CD8-positive, alpha-beta memory T cell (primary cell): ENCODE measurements at regions of chr9 and their contacts with region 1.

Region 1: GRCh38 chr9:114405294-114406034 is 17.7 kb upstream of the AKNA start:
- DNase-seq: peak; percentile 67 to 85 (median 72)
- H3K4me3 ChIP-seq: no peak overlapping the region
- H3K4me3 Mint-ChIP-seq: no peak overlapping the region
- H3K27ac ChIP-seq: no peak overlapping the region
- H3K27ac Mint-ChIP-seq: peak overlapping the region in 5 of 8 donors; percentile 0 to 83 (median 20)
- H3K4me1 ChIP-seq: peaks cover 8% of the 10 kb centered on the region
- H3K4me1 Mint-ChIP-seq: peaks cover 5 to 6% (median 6%) of the 10 kb centered on the region in 3 donors
- H3K27me3 ChIP-seq: no peaks in the 10 kb centered on the region
- H3K27me3 Mint-ChIP-seq: no peaks in the 10 kb centered on the region

Region 2: GRCh38 chr9:113929634-113930389 is 475.7 kb before region 1 on chr9:
- CTCF ChIA-PET with region 1: no interaction called
- POLR2A ChIA-PET with region 1: no interaction called
- DNase-seq: no peak
- H3K4me3 ChIP-seq: no peak overlapping the region
- H3K4me3 Mint-ChIP-seq: no peak overlapping the region
- H3K27ac ChIP-seq: no peak overlapping the region
- H3K27ac Mint-ChIP-seq: no peak overlapping the region
- H3K4me1 ChIP-seq: no peaks in the 10 kb centered on the region
- H3K4me1 Mint-ChIP-seq: no peaks in the 10 kb centered on the region
- H3K27me3 ChIP-seq: no peaks in the 10 kb centered on the region
- H3K27me3 Mint-ChIP-seq: peaks cover 0 to 13% of the 10 kb centered on the region in 2 donors

Region 3: DNA sequence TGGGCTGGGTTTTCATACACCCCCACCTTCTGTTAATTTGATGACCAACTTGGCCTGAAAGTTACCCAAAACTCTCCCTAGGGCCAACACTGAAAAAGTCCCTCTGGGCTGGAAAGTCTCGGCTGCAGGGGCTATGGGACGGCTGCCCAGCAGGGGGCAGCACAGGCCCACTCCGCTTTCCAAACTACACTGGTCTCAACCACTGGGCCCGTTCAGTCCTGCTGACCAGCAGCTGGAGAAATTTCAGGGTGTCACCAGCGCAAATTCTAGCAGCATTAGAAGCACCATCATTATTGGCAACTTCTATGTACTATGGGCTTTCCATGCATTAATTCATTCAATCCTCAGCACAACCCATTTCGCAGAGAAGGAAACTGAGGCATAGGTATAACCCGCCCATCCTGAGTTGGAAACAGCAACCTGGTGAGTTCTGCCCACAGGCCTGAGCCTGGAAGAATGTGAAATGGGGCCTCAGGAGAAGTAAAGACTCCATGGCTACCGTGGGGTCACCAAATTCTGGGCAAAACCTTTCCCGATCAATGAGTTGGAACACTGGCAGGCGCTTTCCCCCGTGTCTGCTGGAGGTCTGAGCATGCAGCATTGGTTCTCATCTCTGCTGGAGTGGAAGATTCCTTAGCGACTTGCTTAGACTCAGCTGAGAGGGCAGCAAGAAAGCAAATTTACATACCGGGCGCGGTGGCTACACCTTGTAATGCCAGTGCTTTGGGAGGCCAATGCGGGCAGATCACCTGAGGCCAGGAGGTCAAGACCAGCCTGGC is 66.1 kb before region 1 on chr9:
- CTCF ChIA-PET with region 1: interaction called, 14 read pairs
- POLR2A ChIA-PET with region 1: interaction called, 8 read pairs
- DNase-seq: peak; percentile 40 to 65 (median 42)
- H3K4me3 ChIP-seq: no peak overlapping the region
- H3K4me3 Mint-ChIP-seq: peak overlapping the region in 1 of 7 donors; percentile 36
- H3K27ac ChIP-seq: no peak overlapping the region
- H3K27ac Mint-ChIP-seq: peak overlapping the region; percentile 51 to 92 (median 78)
- H3K4me1 ChIP-seq: no peaks in the 10 kb centered on the region
- H3K4me1 Mint-ChIP-seq: peaks cover 24 to 58% (median 35%) of the 10 kb centered on the region in 3 donors
- H3K27me3 ChIP-seq: no peaks in the 10 kb centered on the region
- H3K27me3 Mint-ChIP-seq: no peaks in the 10 kb centered on the region

Region 4: GRCh38 chr9:114385412-114386181 is 19.9 kb before region 1 on chr9:
- CTCF ChIA-PET with region 1: interaction called, 45 read pairs
- POLR2A ChIA-PET with region 1: interaction called, 4 read pairs
- DNase-seq: peak; percentile 80 to 95 (median 94)
- H3K4me3 ChIP-seq: peak overlapping the region; percentile 98
- H3K4me3 Mint-ChIP-seq: peak overlapping the region; percentile 92 to 99 (median 96)
- H3K27ac ChIP-seq: peak overlapping the region; percentile 96
- H3K27ac Mint-ChIP-seq: peak overlapping the region; percentile 93 to 100 (median 98)
- H3K4me1 ChIP-seq: peaks cover 74% of the 10 kb centered on the region
- H3K4me1 Mint-ChIP-seq: peaks cover 67 to 83% (median 71%) of the 10 kb centered on the region in 3 donors
- H3K27me3 ChIP-seq: no peaks in the 10 kb centered on the region
- H3K27me3 Mint-ChIP-seq: peaks cover 0 to 7% of the 10 kb centered on the region in 2 donors

Region 5: DNA sequence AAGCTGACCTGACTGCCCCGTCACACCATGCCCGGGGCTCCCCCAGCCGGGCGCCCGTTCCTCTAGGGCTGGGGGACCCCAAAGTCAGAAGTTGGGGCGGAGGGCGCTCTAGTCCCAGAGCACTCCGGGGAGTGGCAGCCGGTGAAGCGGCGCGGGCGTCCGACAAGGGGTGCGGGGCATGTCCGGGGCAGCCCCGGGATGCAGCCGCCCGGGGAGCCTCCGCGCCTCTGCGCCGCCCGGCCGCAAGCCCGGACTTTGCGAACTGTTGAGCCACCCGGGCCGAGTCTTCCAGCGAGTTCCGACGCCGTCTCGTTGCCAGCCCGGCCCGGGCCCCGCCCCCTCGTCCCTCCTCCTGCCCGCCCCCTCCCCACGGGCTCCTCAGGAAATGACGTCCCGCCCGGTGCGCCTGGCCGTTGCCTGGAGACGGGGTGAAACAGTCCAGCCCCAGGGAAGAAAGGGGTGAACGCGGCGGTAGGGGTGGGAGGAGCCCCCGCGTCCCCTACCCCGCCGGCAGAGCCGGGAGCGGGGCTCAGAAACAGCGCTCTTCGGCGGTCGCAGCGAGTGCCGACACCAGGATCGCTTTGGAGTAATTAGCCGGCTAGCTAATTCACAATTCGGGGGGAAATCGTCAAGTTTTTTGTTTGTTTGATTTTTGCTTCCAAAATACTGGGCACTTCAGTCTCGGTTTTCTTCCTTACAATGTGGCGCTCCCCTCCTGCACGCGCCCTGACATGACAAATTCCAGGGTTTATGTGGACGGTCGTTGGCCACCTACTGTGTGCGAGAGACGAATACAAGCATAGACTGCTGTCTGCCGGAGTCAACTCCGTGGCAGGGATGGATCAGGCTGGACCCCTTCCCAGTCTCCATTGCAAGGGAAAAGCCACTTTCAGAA is 100.0 kb after region 1 on chr9 and contains the start of gene WHRN:
- CTCF ChIA-PET with region 1: interaction called, 45 read pairs
- POLR2A ChIA-PET with region 1: interaction called, 3 read pairs
- DNase-seq: peak; percentile 90 to 97 (median 92)
- H3K4me3 ChIP-seq: peak within 1 kb of the TSS; percentile 70
- H3K4me3 Mint-ChIP-seq: peak within 1 kb of the TSS; percentile 84 to 95 (median 88)
- H3K27ac ChIP-seq: peak within 1 kb of the TSS; percentile 76
- H3K27ac Mint-ChIP-seq: peak within 1 kb of the TSS; percentile 82 to 97 (median 95)
- H3K4me1 ChIP-seq: peaks cover 18% of the 10 kb centered on the region
- H3K4me1 Mint-ChIP-seq: peaks cover 40 to 56% (median 53%) of the 10 kb centered on the region in 3 donors
- H3K27me3 ChIP-seq: peaks cover 9% of the 10 kb centered on the region
- H3K27me3 Mint-ChIP-seq: peaks cover 0 to 16% of the 10 kb centered on the region in 2 donors
- total RNA-seq, gene WHRN: 8.6 to 9.0 TPM

Region 6: GRCh38 chr9:114587385-114588202 is 182.1 kb after region 1 on chr9 and contains the start of gene ATP6V1G1:
- CTCF ChIA-PET with region 1: interaction called, 26 read pairs
- POLR2A ChIA-PET with region 1: interaction called, 3 read pairs
- DNase-seq: peak; percentile 96 to 99 (median 99)
- H3K4me3 ChIP-seq: peak within 1 kb of the TSS; percentile 81
- H3K4me3 Mint-ChIP-seq: peak within 1 kb of the TSS; percentile 97 to 100 (median 99)
- H3K27ac ChIP-seq: peak within 1 kb of the TSS; percentile 91
- H3K27ac Mint-ChIP-seq: peak within 1 kb of the TSS; percentile 98 to 100 (median 99)
- H3K4me1 ChIP-seq: peaks cover 37% of the 10 kb centered on the region
- H3K4me1 Mint-ChIP-seq: peaks cover 51 to 55% (median 51%) of the 10 kb centered on the region in 3 donors
- H3K27me3 ChIP-seq: no peaks in the 10 kb centered on the region
- H3K27me3 Mint-ChIP-seq: peaks cover 0 to 5% of the 10 kb centered on the region in 2 donors
- total RNA-seq, gene ATP6V1G1: 48.2 to 49.0 TPM

Region 7: GRCh38 chr9:115085773-115086377 is 680.4 kb after region 1 on chr9:
- CTCF ChIA-PET with region 1: no interaction called
- POLR2A ChIA-PET with region 1: no interaction called
- DNase-seq: no peak
- H3K4me3 ChIP-seq: no peak overlapping the region
- H3K4me3 Mint-ChIP-seq: no peak overlapping the region
- H3K27ac ChIP-seq: no peak overlapping the region
- H3K27ac Mint-ChIP-seq: no peak overlapping the region
- H3K4me1 ChIP-seq: no peaks in the 10 kb centered on the region
- H3K4me1 Mint-ChIP-seq: no peaks in the 10 kb centered on the region
- H3K27me3 ChIP-seq: no peaks in the 10 kb centered on the region
- H3K27me3 Mint-ChIP-seq: peaks cover 2 to 8% of the 10 kb centered on the region in 2 donors